K562 (cell line): ENCODE measurements at regions of chr14 and their contacts with region 1.

Region 1: DNA sequence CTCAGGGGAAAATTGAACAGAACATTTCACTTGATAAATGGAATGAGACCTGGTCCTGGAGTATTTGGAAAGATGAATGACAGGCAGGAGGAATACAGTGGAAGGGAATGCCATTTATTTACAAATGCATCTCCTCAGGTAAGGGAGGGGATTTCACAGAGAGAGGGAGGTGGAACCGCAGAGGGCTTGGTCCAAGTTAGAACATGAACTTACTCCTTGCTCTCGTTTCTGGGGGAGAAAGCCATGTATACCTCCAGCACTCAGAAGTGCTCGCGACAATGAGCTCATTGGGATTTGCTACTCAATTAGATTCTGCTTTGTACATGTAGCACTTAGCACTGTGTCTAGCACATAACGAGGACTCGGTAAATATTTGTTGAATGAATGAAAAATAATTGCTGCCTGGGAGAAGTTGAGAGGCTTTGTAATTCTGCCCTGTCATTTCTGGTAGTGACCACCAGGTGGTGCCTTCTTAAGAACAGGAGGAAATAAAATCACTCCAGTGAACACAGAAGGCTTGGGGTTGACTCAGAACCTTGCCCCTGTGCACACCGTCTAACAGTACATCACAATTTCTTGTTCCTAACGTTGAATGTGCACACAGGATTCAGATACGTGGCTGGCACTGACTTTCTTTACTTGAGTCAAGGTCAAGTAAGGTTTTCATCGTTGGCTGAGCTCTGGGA is 91.6 kb downstream of the RGS6 start:
- DNase-seq: peak; percentile 9 to 23 (median 19)
- ATAC-seq: no peak
- H3K4me3 ChIP-seq: no peak overlapping the region
- H3K27ac ChIP-seq: no peak overlapping the region
- H3K4me1 ChIP-seq: no peaks in the 10 kb centered on the region
- H3K27me3 ChIP-seq: no peaks in the 10 kb centered on the region
- CTCF ChIP-seq: peak in 2 of 3 experiments; percentile 42 to 51; a peak in 3 of 6 replicates
- EP300 ChIP-seq: no peak
- POLR2A ChIP-seq: no peak
- RAD21 ChIP-seq: no peak

Region 2: DNA sequence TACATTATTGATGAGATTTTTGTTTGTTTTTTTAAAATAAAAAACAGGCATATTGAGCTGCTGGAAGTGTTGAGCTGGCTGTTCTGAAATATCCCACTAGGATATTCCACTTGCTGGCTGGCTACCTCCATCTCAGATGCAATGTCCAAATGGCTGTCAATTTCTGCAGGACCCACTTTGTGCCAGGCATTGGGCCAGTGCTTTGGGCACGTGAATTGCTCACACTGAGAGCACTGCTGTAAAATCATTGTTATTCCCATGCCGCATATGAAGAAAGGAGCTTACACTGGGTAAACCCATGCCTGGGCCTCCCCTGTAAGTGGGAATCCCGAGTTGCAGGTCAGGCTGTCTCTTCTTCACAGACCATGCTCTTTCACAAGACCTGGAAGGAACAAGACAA is 34.9 kb before region 1 on chr14:
- CTCF ChIA-PET with region 1: no interaction called
- POLR2A ChIA-PET with region 1: no interaction called
- in situ Hi-C with region 1: no loop called
- intact Hi-C with region 1: no loop called
- DNase-seq: no peak
- ATAC-seq: no peak
- H3K4me3 ChIP-seq: no peak overlapping the region
- H3K27ac ChIP-seq: no peak overlapping the region
- H3K4me1 ChIP-seq: no peaks in the 10 kb centered on the region
- H3K27me3 ChIP-seq: no peaks in the 10 kb centered on the region
- CTCF ChIP-seq: no peak
- EP300 ChIP-seq: no peak
- POLR2A ChIP-seq: no peak
- RAD21 ChIP-seq: no peak

Region 3: DNA sequence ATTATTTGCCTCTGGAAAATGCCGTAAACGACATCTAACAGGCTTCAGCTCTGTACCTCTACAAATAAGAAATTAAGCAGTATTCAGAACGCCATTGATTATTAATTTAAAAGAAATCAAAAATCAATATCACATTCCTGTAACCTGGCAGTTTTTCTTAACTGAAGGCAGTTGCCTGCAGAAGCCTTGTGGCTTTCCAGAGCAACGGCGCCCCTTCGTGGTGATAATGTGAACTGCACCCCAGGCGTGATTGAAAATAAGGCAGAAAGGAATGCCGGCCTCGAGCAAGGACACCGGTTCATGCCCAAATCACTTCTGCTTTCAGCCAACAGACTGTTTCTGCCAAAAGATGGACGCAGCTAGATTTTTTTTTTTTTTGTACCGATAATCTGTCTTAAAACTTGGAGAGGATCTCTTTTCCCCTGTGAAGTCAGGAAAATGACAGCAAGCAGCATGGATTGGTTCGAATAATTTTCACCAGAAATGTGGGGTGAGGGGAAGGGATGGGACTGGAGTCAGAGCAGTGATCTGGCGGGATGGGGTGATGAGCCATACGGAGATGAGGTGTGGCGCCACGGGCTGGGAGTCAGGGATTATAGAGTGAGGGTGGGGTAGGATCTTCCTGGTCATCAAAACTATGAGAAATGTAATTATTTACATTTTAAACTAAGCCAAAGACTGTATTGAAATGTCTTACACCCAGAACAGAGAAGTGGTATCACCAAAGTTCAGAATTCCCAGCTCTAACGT is 397.0 kb after region 1 on chr14:
- CTCF ChIA-PET with region 1: no interaction called
- POLR2A ChIA-PET with region 1: no interaction called
- in situ Hi-C with region 1: no loop called
- intact Hi-C with region 1: loop called (anchors 5 kb)
- DNase-seq: peak; percentile 41 to 66 (median 64)
- ATAC-seq: peak; percentile 71
- H3K4me3 ChIP-seq: no peak overlapping the region
- H3K27ac ChIP-seq: no peak overlapping the region
- H3K4me1 ChIP-seq: no peaks in the 10 kb centered on the region
- H3K27me3 ChIP-seq: no peaks in the 10 kb centered on the region
- CTCF ChIP-seq: peak; percentile 64 to 88 (median 83)
- EP300 ChIP-seq: no peak
- POLR2A ChIP-seq: no peak
- RAD21 ChIP-seq: peak; percentile 48 to 75